Panc1 (cell line): ENCODE measurements at regions of chr2 and their contacts with region 1.

Region 1: GRCh38 chr2:55118643-55119083 is 68.4 kb upstream of the RTN4 start:
- DNase-seq: no peak
- ATAC-seq: no peak
- H3K4me3 ChIP-seq: no peak overlapping the region
- H3K27ac ChIP-seq: no peak overlapping the region
- H3K4me1 ChIP-seq: 0 out of 2 replicates have a peak, but pooled peaks cover 4% of the 10 kb centered on the region
- H3K27me3 ChIP-seq: no peaks in the 10 kb centered on the region
- CTCF ChIP-seq: no peak

Region 2: GRCh38 chr2:54881759-54882158 is 236.9 kb before region 1 on chr2:
- CTCF ChIA-PET with region 1: interaction called, 10 read pairs
- POLR2A ChIA-PET with region 1: no interaction called
- in situ Hi-C with region 1: no loop called
- intact Hi-C with region 1: no loop called
- DNase-seq: no peak
- ATAC-seq: no peak
- H3K4me3 ChIP-seq: no peak overlapping the region
- H3K27ac ChIP-seq: no peak overlapping the region
- H3K4me1 ChIP-seq: no peaks in the 10 kb centered on the region
- H3K27me3 ChIP-seq: no peaks in the 10 kb centered on the region
- CTCF ChIP-seq: no peak